Naive thymus-derived CD4-positive, alpha-beta T cell (primary cell): ENCODE measurements at regions of chr16 and their contacts with region 1.

Region 1: DNA sequence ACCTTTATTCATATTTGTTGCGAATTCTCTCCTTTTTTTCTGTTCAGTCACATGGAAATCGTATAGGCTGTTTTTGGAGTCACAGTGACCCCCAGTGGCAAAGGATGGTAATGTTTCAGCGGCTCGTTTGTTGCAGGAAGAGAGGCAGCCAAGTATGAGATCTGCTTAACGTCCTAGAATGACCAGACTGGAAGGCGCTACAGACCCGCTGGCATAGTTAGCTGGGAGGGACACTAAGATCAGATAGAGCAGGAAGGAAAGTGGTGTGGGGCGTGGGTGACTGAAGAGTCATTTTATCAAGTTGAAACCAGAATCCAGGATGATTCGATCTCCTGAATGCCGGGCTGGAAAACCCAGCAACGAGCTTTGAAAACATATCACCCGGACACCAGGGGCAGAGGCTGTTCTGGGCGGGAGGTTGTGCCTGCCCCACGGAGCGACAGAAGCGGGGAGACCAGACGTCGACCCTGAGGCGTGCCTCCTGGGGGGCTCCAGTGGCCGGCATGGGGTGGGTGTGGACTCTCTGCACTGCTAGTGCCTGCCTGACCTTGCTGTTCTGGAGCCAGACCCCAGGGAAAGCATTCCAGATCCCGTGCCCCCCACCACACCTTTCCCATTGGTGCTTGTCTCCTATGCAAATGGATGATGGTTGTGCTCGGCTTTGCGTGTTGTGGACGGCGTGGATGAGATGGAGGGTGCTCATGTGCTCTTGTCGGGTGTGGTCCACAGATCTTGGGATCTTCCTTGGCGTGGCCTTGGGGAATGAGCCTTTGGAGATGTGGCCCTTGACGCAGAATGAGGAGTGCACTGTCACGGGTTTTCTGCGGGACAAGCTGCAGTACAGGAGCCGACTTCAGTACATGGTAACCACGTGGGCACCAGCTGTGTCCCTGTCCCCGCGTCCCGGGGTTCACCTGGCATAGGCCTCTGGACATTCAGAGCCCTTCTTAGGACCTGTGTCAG is 7.7 kb downstream of the IL34 start:
- DNase-seq: peak; percentile 57 to 86 (median 77)
- ATAC-seq: peak; percentile 89
- H3K4me3 ChIP-seq: no peak overlapping the region
- H3K4me3 Mint-ChIP-seq: peak overlapping the region; percentile 3 to 76 (median 51)
- H3K27ac ChIP-seq: no peak overlapping the region
- H3K27ac Mint-ChIP-seq: peak overlapping the region in 4 of 9 donors; percentile 3 to 60 (median 51)
- H3K4me1 ChIP-seq: peaks cover 0 to 3% of the 10 kb centered on the region in 2 donors
- H3K4me1 Mint-ChIP-seq: peaks cover 4 to 6% (median 5%) of the 10 kb centered on the region in 7 donors
- H3K27me3 ChIP-seq: no peaks in the 10 kb centered on the region
- H3K27me3 Mint-ChIP-seq: peaks cover 0 to 3% (median 0%) of the 10 kb centered on the region in 5 donors

Region 2: DNA sequence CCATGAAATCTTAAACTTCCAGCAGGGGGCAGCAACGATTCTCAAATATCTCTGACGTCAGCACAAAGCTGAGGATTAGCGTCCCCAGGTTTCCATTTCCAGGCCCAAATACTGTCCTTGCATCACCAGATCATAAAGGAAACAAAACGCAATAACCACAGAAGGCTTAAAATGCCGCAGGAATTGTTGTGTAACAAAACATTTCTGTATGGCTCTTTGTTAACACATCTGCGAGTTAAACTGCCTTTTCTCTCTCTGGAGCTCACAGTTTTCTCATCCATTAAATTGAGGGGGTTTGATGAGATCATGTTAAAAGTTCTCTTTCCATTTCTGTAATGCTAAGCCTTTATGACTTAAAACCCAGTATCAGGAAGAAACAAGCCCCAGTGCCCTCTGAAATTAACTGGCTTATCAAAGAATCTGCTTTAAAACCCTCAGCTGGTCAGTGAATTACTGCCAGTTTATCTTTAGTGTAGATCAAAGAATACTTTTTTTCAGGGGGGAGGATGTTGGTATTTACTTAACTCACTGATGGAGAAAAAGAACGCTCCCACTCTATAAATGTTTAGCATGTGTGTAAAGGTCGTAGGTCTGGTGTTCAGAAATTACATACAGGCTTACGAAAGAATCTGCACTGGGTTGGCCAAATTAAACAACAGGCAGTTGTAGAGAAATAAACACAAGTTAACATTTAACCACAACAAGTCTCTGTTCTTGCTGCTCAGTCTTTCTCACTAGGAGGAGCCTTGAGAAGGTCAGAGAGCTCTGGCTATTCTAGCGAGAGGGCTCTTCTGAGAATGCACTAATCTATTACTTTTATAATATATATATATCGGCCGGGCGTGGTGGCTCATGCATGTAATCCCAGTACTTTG is 1257.7 kb before region 1 on chr16:
- CTCF ChIA-PET with region 1: no interaction called
- POLR2A ChIA-PET with region 1: no interaction called
- intact Hi-C with region 1: loop called in 1 of 2 experiments (anchors 1 kb)
- DNase-seq: peak; percentile 23 to 73 (median 66)
- ATAC-seq: peak; percentile 86
- H3K4me3 ChIP-seq: no peak overlapping the region
- H3K4me3 Mint-ChIP-seq: peak overlapping the region in 3 of 10 donors; percentile 26 to 57 (median 50)
- H3K27ac ChIP-seq: peak overlapping the region; percentile 22
- H3K27ac Mint-ChIP-seq: peak overlapping the region; percentile 8 to 76 (median 41)
- H3K4me1 ChIP-seq: peaks cover 0 to 3% of the 10 kb centered on the region in 2 donors
- H3K4me1 Mint-ChIP-seq: peaks cover 0 to 17% (median 5%) of the 10 kb centered on the region in 7 donors
- H3K27me3 ChIP-seq: no peaks in the 10 kb centered on the region
- H3K27me3 Mint-ChIP-seq: peaks cover 0 to 11% (median 0%) of the 10 kb centered on the region in 5 donors

Region 3: GRCh38 chr16:70370924-70371323 is 283.2 kb before region 1 on chr16:
- CTCF ChIA-PET with region 1: interaction called, 4 read pairs
- POLR2A ChIA-PET with region 1: no interaction called
- intact Hi-C with region 1: loop called in 1 of 2 experiments (anchors 1 kb)
- DNase-seq: no peak
- ATAC-seq: no peak
- H3K4me3 ChIP-seq: no peak overlapping the region
- H3K4me3 Mint-ChIP-seq: no peak overlapping the region
- H3K27ac ChIP-seq: no peak overlapping the region
- H3K27ac Mint-ChIP-seq: peak overlapping the region in 5 of 9 donors; percentile 42 to 70 (median 51)
- H3K4me1 ChIP-seq: peaks cover 0 to 4% of the 10 kb centered on the region in 2 donors
- H3K4me1 Mint-ChIP-seq: peaks cover 0 to 10% (median 7%) of the 10 kb centered on the region in 7 donors
- H3K27me3 ChIP-seq: no peaks in the 10 kb centered on the region
- H3K27me3 Mint-ChIP-seq: no peaks in the 10 kb centered on the region

Region 4: DNA sequence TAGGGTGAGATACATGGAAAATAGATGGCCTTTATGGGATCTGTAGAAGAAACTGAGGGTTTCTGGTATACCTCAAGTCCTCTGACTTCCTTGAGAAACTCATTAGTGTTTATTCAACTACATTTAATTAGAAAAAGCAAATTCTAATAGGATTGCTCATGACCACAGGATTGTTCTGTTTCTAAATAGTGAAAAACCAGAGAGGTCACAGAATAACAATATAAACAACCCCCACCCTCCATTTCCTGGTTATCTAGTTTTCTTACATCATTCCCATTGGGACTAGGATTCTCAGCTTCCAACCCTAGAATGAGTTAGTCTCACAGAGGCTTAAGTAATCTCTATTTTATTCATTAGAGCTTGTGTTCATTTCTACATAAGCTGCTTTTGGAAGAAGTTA is 100.4 kb before region 1 on chr16:
- CTCF ChIA-PET with region 1: interaction called, 3 read pairs
- POLR2A ChIA-PET with region 1: no interaction called
- intact Hi-C with region 1: loop called in 1 of 2 experiments (anchors 10 kb)
- DNase-seq: no peak
- ATAC-seq: no peak
- H3K4me3 ChIP-seq: no peak overlapping the region
- H3K4me3 Mint-ChIP-seq: no peak overlapping the region
- H3K27ac ChIP-seq: no peak overlapping the region
- H3K27ac Mint-ChIP-seq: peak overlapping the region in 3 of 9 donors; percentile 26 to 76 (median 54)
- H3K4me1 ChIP-seq: no peaks in the 10 kb centered on the region
- H3K4me1 Mint-ChIP-seq: peaks cover 8 to 26% (median 18%) of the 10 kb centered on the region in 7 donors
- H3K27me3 ChIP-seq: no peaks in the 10 kb centered on the region
- H3K27me3 Mint-ChIP-seq: no peaks in the 10 kb centered on the region

Region 5: DNA sequence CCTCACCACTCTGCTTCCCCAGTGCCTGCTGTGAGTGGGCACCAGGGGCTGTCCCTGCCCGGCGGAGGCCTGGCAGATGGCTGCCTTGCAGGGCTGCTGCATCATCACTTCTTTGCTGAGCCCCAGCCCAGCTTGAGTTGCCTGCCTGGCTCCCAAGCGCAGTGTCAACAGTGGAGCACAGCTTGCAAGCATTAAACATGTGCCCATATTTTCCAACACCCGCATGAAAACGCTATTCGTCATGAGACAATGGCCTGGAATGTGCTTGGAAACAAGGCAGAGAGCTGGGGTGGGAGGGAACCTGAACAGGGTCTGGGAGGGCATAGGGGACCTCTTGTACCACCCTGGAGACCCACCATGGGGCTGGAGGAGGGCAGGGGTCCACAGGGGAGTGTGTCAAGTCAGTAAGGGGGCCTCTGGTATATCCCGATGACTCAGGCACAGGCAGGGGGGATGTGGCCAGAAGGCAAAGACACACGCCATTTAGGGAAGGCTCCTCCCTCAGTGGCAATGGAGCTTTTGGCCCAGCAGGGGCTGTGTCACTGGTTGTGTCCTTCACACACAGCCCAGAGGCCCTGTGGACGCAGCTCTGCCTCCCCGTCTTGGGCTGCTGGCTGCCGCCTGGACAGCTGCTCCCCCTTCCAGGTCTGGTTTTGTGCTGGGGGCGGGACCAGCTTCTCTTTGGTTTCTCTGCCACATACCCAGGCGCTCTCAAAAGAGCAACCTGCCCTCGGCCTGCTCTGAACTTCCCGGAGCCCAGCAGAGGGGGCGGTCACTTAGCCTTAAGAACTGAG is 49.1 kb after region 1 on chr16:
- CTCF ChIA-PET with region 1: no interaction called
- POLR2A ChIA-PET with region 1: no interaction called
- intact Hi-C with region 1: no loop called
- DNase-seq: no peak
- ATAC-seq: no peak
- H3K4me3 ChIP-seq: no peak overlapping the region
- H3K4me3 Mint-ChIP-seq: no peak overlapping the region
- H3K27ac ChIP-seq: no peak overlapping the region
- H3K27ac Mint-ChIP-seq: no peak overlapping the region
- H3K4me1 ChIP-seq: no peaks in the 10 kb centered on the region
- H3K4me1 Mint-ChIP-seq: peaks cover 0 to 14% (median 0%) of the 10 kb centered on the region in 7 donors
- H3K27me3 ChIP-seq: no peaks in the 10 kb centered on the region
- H3K27me3 Mint-ChIP-seq: no peaks in the 10 kb centered on the region

Region 6: GRCh38 chr16:70770626-70771552 is 116.8 kb after region 1 on chr16:
- CTCF ChIA-PET with region 1: interaction called, 15 read pairs
- POLR2A ChIA-PET with region 1: no interaction called
- intact Hi-C with region 1: loop called (anchors 1 kb)
- DNase-seq: peak; percentile 20 to 70 (median 38)
- ATAC-seq: peak; percentile 76
- H3K4me3 ChIP-seq: no peak overlapping the region
- H3K4me3 Mint-ChIP-seq: no peak overlapping the region
- H3K27ac ChIP-seq: no peak overlapping the region
- H3K27ac Mint-ChIP-seq: peak overlapping the region in 3 of 9 donors; percentile 12 to 26 (median 13)
- H3K4me1 ChIP-seq: no peaks in the 10 kb centered on the region
- H3K4me1 Mint-ChIP-seq: peaks cover 0 to 8% (median 0%) of the 10 kb centered on the region in 7 donors
- H3K27me3 ChIP-seq: no peaks in the 10 kb centered on the region
- H3K27me3 Mint-ChIP-seq: no peaks in the 10 kb centered on the region

Region 7: DNA sequence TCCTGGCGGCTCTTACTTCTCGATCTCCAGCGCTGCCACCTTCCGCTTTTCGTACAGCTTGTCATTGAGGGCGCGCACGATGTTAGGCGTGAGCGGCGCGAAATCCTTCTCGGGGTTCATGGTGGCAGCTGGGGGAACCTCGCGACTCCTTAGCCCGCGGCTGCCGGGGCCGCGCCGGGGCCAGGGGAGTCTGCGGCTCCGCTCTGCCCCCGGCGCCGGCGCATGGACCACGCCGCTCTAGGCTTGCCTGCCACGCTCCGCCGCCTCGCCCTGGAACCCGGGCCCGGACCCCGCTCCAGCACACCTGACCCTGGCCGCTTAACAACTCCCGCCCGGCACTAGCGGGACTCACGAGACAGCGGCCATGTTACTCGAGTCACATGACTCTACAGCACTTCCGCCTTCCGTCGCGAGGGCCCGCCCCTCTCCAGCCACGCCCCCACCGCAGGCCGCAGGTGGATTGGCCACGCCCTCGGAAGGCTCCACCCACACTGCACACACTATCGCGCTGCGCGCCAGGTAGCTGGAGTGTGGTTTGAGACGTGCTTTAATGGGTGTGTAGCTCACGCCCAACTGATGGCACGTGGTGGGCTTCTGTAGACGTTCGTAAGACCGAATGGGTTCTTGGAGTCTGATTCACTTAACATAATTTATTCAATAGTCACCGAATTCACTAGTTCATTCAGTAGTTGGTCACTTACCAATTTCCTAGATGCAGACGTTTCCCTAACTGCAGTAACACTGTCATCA is 146.9 kb after region 1 on chr16 and contains the start of gene VAC14:
- CTCF ChIA-PET with region 1: no interaction called
- POLR2A ChIA-PET with region 1: no interaction called
- intact Hi-C with region 1: no loop called
- DNase-seq: peak; percentile 96 to 99 (median 97)
- ATAC-seq: peak; percentile 99
- H3K4me3 ChIP-seq: peak within 1 kb of the TSS; percentile 90
- H3K4me3 Mint-ChIP-seq: peak within 1 kb of the TSS; percentile 90 to 98 (median 94)
- H3K27ac ChIP-seq: peak within 1 kb of the TSS; percentile 78
- H3K27ac Mint-ChIP-seq: peak within 1 kb of the TSS; percentile 84 to 95 (median 92)
- H3K4me1 ChIP-seq: peaks cover 11 to 17% of the 10 kb centered on the region in 2 donors
- H3K4me1 Mint-ChIP-seq: peaks cover 19 to 49% (median 44%) of the 10 kb centered on the region in 7 donors
- H3K27me3 ChIP-seq: no peaks in the 10 kb centered on the region
- H3K27me3 Mint-ChIP-seq: peaks cover 0 to 15% (median 0%) of the 10 kb centered on the region in 5 donors
- total RNA-seq, gene VAC14: 36.7 to 47.1 (median 45.9) TPM